Breast epithelium (tissue), 4 donors: ENCODE measurements at regions of chr1 and their contacts with region 1.

Region 1: DNA sequence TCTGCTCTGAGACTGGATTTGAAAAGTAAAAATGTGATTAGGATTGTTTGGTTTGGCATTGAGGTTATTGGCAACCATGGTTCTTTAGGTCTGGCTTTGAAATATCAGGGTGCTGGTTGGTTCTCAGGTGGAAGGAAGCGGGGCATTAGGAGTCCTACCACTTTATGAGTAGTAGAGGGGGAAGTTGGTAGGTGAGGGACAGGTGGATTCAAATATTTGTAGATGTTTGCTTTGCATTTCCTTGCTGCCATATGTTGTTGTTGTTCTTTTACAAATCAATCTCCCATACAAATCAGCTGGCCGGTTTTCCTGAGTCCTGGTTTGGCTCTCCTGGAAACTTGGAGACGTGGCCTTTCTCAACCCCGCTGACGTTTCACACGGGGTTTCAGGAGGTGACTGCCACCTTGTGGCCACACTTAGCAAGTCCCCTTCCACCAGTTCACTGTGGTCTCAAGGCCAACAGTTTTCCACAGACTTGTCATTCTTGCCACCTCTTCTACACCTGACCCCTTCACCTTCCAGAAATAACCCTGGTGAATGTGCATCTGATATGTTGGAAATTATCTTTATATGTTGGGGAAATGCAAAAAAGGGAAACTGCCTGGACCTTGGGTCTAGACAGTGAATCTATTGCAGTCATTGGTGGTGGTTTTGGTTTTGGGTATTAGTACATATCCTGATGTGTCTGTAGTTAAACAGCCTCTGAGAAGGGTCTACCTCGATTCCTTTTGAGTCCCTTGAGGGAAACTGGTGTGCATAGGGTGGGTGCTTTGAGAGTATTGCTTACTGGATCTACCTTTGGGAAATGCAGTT is 127.0 kb upstream of the KIAA0040 start:
- DNase-seq: peak; percentile 67 to 79
- H3K4me3 ChIP-seq: no peak overlapping the region
- H3K27ac ChIP-seq: peak overlapping the region; percentile 53 to 69
- H3K4me1 ChIP-seq: no peaks in the 10 kb centered on the region
- H3K27me3 ChIP-seq: no peaks in the 10 kb centered on the region
- CTCF ChIP-seq: peak in 2 of 3 donors; percentile 85 to 90
- POLR2A ChIP-seq: no peak

Region 2: GRCh38 chr1:175154629-175155472 is 164.8 kb before region 1 on chr1:
- intact Hi-C with region 1: loop called (anchors 10 kb)
- DNase-seq: peak; percentile 67 to 75
- H3K4me3 ChIP-seq: no peak overlapping the region
- H3K27ac ChIP-seq: no peak overlapping the region
- H3K4me1 ChIP-seq: no peaks in the 10 kb centered on the region
- H3K27me3 ChIP-seq: no peaks in the 10 kb centered on the region
- CTCF ChIP-seq: peak; percentile 81 to 86 (median 85)
- POLR2A ChIP-seq: no peak

Region 3: DNA sequence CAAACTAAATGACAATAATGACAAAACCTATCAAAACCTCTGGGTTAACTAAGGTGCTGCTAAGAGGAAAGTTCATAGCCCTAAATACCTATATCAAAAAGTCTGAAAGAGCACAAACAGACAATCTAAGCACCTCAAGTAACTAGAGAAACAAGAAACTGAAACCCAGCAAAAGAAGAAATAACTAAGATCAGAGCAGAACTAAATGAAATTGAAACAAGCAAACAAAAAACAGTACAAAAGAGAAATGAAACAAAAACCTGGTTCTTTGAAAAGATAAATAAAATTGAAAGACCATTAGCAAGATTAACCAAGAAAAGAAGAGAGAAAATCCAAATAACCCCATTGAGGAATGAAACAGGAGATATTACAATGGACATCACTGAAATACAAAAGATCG is 82.2 kb before region 1 on chr1:
- intact Hi-C with region 1: no loop called
- DNase-seq: no peak
- H3K4me3 ChIP-seq: no peak overlapping the region
- H3K27ac ChIP-seq: no peak overlapping the region
- H3K4me1 ChIP-seq: no peaks in the 10 kb centered on the region
- H3K27me3 ChIP-seq: no peaks in the 10 kb centered on the region
- CTCF ChIP-seq: no peak
- POLR2A ChIP-seq: no peak

Region 4: DNA sequence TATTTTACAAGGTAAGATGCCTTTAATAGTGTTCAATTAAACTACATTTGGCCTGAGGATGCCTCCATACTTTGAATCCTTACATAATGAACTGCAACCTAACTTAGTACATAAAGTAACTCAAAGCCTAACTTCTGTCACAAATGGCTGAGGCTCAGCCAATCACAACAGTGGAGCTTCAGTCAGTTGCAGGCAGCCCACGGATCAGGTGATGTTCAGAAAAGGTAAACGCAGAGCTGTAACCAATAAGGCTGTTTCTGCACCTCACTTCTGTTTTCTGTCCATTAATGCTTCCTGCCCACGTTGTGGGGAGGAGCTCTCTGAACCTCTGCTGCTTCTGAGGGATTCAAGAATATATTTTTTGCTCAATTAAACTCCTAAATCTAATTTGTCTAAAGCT is 32.2 kb before region 1 on chr1:
- intact Hi-C with region 1: no loop called
- DNase-seq: no peak
- H3K4me3 ChIP-seq: no peak overlapping the region
- H3K27ac ChIP-seq: no peak overlapping the region
- H3K4me1 ChIP-seq: no peaks in the 10 kb centered on the region
- H3K27me3 ChIP-seq: no peaks in the 10 kb centered on the region
- CTCF ChIP-seq: no peak
- POLR2A ChIP-seq: no peak